ENCODE measurements at regions of chr9 and their contacts with region 1.

Region 1: DNA sequence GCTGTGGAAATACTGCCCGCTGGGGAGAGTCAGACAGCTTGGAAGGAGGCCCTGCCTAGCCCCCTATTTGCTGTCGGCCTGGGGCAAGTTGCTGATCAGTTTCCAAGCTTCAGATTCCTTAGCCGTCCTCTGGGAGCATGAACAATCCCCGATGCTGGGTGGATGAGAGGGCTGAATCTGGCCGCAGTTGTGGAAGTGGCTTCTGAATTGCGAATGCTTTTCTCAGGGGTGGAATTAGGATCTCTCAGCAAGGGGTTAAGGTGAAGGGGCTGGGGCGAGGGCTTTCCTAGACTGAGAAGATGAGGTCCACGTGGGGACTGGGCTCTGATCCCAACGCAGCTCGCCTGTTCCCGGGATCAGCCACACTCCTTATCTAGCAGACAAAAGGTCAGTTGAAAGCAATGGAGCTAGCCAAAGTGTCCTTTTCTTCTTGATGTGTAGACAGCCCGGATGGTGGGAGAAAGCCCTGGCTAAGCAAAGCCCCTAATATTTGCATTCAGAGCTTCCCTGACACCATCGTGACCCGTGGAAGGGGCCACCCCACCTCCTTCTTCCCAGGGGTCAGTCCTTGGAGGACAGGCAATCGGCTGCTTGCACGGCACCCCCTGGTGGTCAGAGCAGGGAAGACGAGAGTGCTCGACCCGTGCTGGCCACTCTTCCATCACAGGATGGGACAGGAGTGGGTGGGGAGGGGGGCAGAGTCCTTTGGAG is 54.9 kb downstream of the COL15A1 start:
- DNase-seq: no peak
- H3K4me3 ChIP-seq: no peak overlapping the region
- H3K27ac ChIP-seq: no peak overlapping the region
- H3K27me3 ChIP-seq: peaks cover 33% of the 10 kb centered on the region
- CTCF ChIP-seq: peak; percentile 92

Region 2: DNA sequence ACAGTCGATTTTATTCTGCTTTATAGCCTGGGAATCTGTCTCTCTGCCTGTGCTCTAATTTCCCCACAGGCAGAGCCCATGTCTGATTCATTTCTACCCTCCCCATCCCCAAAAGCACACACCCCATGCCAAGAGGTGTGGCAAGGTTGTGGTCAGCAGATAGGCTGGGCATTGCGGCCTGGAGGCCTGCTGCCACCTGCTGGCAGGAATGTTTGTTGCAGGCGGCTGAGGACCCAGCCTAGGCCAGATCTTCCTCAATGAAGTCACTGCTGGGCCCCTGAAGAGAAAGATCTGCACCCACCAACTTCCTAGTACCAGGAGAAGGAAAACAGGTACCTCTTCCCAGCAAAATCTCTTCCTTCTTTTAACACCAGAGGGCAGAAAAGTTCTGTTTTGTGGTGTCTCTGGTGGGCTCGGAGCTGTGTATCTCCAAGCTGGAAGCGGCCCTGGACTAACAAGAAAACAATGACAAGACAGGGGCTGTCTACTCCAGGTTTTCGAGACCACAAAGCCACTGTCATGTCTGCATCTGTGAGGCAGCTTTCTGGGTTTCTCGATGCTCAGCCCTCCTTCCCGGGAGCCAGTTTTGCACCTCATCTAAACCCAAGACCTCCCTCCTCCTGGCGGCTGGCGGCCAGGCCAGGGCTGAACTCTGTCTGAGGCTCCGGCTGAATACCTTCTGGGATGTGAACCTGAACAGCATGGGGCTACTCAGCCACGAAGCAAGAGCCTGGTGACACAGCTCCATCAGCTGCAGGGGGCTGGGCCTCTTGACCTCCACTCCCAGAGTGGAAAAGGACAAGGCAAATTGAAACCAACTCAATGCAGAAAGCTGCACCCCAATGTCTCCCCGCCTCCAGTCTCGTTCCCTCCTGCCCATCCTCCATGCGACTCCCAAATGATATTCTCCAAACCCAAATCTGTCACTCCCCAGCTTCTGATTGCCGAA is 207.2 kb before region 1 on chr9:
- CTCF ChIA-PET with region 1: no interaction called
- POLR2A ChIA-PET with region 1: no interaction called
- DNase-seq: peak; percentile 80
- H3K4me3 ChIP-seq: no peak overlapping the region
- H3K27ac ChIP-seq: peak overlapping the region; percentile 21
- H3K27me3 ChIP-seq: no peaks in the 10 kb centered on the region
- CTCF ChIP-seq: peak; percentile 96

Region 3: DNA sequence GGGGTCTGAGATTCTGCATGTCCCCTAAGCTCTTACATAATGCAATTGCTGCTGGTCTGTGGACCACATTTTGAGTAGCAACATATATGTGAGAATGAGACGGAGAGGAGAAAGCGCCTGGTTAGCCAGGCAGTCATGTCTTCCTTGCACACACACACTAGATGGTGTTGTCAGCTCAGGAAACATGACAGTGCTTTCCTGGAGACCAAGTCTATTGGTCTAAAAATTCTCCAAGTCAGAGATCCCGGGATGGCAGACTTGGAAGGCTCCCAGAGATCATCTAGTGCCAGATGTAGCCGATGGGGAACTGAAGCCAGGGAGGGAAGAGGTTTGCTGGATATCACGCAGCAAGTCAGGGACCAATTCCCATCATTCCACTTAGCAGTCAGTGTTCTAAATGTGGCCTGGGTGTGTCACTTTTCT is 137.7 kb before region 1 on chr9:
- CTCF ChIA-PET with region 1: interaction called, 121 read pairs
- POLR2A ChIA-PET with region 1: interaction called, 4 read pairs
- DNase-seq: peak; percentile 77
- H3K4me3 ChIP-seq: no peak overlapping the region
- H3K27ac ChIP-seq: no peak overlapping the region
- H3K27me3 ChIP-seq: peaks cover 6% of the 10 kb centered on the region
- CTCF ChIP-seq: peak; percentile 67

Region 4: DNA sequence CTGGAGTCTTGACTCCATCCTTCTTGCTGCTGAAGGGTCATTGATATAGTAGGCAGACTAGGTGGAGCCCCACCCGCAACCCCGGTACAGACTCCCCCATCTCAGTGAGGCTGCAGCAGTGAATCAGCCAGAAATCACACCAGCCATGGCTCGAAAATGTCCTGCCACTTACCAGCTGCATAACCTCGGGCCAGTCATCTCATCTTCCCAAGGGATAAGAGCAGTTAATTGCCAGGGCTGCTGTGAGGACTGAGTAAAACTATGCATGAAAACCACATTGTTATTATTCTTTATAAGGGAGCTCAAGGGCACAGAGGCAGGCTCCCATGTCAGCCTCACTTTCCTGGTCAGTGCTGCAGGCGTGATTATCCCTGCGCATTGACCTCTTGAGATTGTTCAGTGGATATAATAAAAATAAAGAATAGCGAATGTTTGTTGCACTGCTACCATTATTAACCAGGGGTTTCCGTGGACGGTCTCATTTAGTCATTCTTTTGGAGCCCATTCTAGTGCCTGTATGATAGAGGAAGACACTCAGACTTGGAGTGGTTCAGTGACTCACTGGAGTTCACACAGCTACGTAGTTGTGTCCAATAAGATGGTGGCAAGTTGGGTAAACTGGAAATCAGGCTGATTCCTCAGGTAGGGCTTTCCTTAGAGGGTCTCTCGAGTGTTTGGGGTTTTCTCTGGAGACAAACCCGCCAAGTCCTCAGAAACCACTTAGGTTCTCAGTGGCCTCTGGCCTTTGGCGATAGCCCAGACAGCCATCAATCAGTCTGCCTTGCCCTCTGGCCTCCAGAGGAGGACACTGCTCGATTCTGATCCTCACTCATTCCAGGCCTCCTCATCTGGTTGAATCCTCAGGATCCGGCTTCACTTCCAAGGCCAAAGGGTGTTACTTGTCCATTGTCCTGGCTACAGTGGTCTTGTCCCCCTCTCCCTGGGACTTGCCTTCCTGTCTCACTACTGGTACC is 15.0 kb before region 1 on chr9:
- CTCF ChIA-PET with region 1: interaction called, 37 read pairs
- POLR2A ChIA-PET with region 1: interaction called, 4 read pairs
- DNase-seq: peak; percentile 67
- H3K4me3 ChIP-seq: no peak overlapping the region
- H3K27ac ChIP-seq: peak overlapping the region; percentile 47
- H3K27me3 ChIP-seq: peaks cover 4% of the 10 kb centered on the region
- CTCF ChIP-seq: no peak

Region 5: DNA sequence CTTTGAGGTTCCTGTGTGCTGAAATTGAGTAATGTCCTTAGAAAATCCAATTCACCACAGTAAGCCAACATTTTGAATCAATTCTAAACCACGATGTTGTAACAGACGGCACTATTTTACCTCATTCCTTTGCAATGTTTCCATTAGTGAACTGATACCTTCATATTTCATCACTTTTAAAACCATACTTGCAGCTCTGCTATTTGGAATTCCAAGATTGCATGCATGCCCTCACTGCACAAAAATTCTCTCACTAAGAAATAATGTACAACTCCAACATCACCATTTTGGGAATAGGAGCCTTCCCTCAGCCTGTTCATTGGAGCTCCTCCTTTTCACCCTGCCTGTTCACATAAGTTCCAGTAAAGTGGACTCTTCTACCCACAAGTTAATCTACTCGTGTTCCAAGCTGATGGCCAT is 31.5 kb after region 1 on chr9:
- CTCF ChIA-PET with region 1: interaction called, 14 read pairs
- POLR2A ChIA-PET with region 1: no interaction called
- DNase-seq: peak; percentile 96
- H3K4me3 ChIP-seq: no peak overlapping the region
- H3K27ac ChIP-seq: peak overlapping the region; percentile 92
- H3K27me3 ChIP-seq: no peaks in the 10 kb centered on the region
- CTCF ChIP-seq: no peak

Region 6: DNA sequence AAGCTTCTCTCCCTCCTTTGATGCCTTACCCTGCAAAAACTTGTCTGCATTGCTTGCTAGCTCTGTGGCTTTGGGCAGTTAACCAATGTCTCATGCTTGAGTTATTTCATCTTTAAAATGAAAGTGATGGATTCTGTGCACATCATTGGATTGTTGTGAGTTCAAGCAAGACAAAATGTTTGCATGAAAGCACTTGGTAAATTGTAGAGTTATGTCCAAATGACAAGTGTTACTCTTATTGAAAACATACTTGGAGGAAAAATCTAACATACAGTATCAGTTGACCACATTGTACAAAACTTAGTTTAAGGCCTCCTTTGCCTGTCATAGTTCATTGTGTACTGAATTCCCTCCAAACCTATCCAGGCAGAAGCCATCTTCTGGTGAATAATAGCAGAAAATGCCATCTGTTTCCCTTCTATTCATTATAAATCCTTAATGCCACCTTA is 136.3 kb after region 1 on chr9:
- CTCF ChIA-PET with region 1: interaction called, 161 read pairs
- POLR2A ChIA-PET with region 1: no interaction called
- DNase-seq: peak; percentile 27
- H3K4me3 ChIP-seq: no peak overlapping the region
- H3K27ac ChIP-seq: no peak overlapping the region
- H3K27me3 ChIP-seq: no peaks in the 10 kb centered on the region
- CTCF ChIP-seq: no peak

Region 7: GRCh38 chr9:99666571-99666970 is 668.0 kb after region 1 on chr9:
- CTCF ChIA-PET with region 1: no interaction called
- POLR2A ChIA-PET with region 1: no interaction called
- DNase-seq: no peak
- H3K4me3 ChIP-seq: no peak overlapping the region
- H3K27ac ChIP-seq: no peak overlapping the region
- H3K27me3 ChIP-seq: no peaks in the 10 kb centered on the region
- CTCF ChIP-seq: no peak

Measured in AG04450 (cell line).